Activated CD4-positive, alpha-beta memory T cell treated with anti-CD3 and anti-CD28 coated beads, Interleukin-2, amount 10 ng/mL, durations not matched to agents 7 days and 5 days (primary cell): ENCODE measurements at regions of chr14 and their contacts with region 1.

Region 1: DNA sequence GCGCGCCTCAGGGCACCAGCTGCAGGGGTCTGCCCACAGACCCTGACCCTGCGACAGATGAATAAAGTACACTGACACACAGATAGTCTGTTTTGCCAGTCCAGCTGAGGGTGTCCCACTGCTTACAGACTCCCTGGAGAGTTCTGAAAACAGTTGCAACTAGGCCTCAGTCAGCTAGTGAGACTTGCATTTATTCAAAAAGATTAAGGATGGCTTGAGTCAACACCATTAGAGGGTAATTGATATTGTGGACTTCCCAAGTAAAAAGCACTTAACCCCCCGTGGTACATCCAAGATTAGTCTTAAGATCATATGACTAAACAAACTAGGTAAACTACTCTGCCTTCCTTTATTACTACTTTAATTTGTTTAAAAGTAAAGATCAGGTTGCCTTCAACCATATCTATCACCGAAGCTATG is 11.1 kb upstream of the PSEN1 start:
- DNase-seq: no peak
- H3K4me3 Mint-ChIP-seq: no peak overlapping the region
- H3K27ac Mint-ChIP-seq: no peak overlapping the region
- H3K4me1 Mint-ChIP-seq: no peaks in the 10 kb centered on the region
- H3K27me3 Mint-ChIP-seq: no peaks in the 10 kb centered on the region

Region 2: GRCh38 chr14:73136387-73137225 is 11.4 kb after region 1 on chr14 and contains the start of gene PSEN1:
- CTCF ChIA-PET with region 1: no interaction called
- POLR2A ChIA-PET with region 1: interaction called, 10 read pairs
- DNase-seq: peak; percentile 99
- H3K4me3 Mint-ChIP-seq: peak within 1 kb of the TSS; percentile 85
- H3K27ac Mint-ChIP-seq: peak within 1 kb of the TSS; percentile 97
- H3K4me1 Mint-ChIP-seq: peaks cover 32% of the 10 kb centered on the region
- H3K27me3 Mint-ChIP-seq: no peaks in the 10 kb centered on the region
- total RNA-seq, gene PSEN1: 41.8 to 44.5 TPM